Activated CD8-positive, alpha-beta memory T cell treated with anti-CD3 and anti-CD28 coated beads, Interleukin-2, amount 10 ng/mL, durations not matched to agents 7 days and 5 days (primary cell): ENCODE measurements at regions of chr12 and their contacts with region 1.

Region 1: GRCh38 chr12:48851883-48852733 is at the start of gene DDX23:
- DNase-seq: peak; percentile 97
- ATAC-seq: peak; percentile 94
- H3K4me3 Mint-ChIP-seq: peak within 1 kb of the TSS; percentile 96
- H3K27ac Mint-ChIP-seq: peak within 1 kb of the TSS; percentile 97
- H3K4me1 Mint-ChIP-seq: peaks cover 33% of the 10 kb centered on the region
- H3K27me3 Mint-ChIP-seq: no peaks in the 10 kb centered on the region
- total RNA-seq, gene DDX23: 146 to 157 TPM

Region 2: DNA sequence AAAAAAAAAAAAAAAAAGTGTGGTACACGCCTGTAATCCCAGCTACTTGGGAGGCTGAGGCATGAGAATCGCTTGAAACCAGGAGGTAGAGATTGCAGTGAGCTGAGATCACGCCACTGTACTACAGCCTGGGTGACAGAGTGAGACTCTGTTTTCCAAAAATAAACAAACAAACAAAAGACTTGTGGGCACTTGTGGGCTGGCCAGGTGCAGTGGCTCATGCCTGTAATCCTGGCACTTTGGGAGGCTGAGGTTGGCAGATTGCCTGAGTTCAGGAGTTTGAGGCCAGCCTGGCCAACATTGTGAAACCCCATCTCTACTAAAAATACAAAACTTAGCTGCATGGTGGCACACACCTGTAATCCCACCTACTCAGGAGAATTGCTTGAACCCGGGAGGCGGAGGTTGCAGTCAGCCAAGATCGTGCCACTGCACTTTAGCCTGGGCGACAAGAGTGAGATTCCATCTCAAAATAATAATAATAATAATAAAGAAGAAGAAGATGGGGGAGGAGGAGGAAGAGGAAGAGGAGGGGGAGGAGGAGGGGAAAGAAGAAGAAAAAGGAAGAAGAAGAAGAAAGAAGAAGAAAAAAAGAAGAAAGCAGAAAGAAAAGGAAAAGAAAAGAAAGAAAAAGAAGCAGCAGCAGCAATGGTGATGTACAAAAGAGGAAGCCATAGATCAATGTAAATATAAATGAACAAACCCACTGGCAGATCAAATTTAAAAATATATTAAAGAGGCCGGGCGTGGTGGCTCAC is 107.7 kb before region 1 on chr12:
- CTCF ChIA-PET with region 1: no interaction called
- DNase-seq: no peak
- ATAC-seq: no peak
- H3K4me3 Mint-ChIP-seq: no peak overlapping the region
- H3K27ac Mint-ChIP-seq: no peak overlapping the region
- H3K4me1 Mint-ChIP-seq: no peaks in the 10 kb centered on the region
- H3K27me3 Mint-ChIP-seq: peaks cover 23% of the 10 kb centered on the region

Region 3: DNA sequence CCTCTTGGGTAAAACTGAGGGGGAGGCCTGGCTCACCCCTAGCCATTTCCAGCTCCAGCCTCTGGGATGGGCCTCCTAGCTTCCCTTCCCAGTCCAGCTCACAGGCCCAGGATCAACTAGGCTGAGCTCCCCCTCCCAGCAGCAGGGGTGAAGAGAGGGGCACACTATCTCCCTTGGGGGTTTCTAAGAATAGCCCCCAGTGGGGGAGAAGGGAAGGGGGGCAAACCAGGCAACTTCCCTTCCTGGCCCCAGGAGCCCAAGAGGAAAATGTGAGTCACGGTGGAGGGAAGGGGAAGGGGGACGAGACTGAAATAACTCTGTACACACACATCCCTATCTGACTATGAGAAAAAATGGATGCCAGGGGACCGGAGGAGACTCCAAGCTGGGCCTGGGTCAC is 72.2 kb before region 1 on chr12:
- CTCF ChIA-PET with region 1: no interaction called
- DNase-seq: no peak
- ATAC-seq: no peak
- H3K4me3 Mint-ChIP-seq: no peak overlapping the region
- H3K27ac Mint-ChIP-seq: no peak overlapping the region
- H3K4me1 Mint-ChIP-seq: no peaks in the 10 kb centered on the region
- H3K27me3 Mint-ChIP-seq: peaks cover 4% of the 10 kb centered on the region

Region 4: DNA sequence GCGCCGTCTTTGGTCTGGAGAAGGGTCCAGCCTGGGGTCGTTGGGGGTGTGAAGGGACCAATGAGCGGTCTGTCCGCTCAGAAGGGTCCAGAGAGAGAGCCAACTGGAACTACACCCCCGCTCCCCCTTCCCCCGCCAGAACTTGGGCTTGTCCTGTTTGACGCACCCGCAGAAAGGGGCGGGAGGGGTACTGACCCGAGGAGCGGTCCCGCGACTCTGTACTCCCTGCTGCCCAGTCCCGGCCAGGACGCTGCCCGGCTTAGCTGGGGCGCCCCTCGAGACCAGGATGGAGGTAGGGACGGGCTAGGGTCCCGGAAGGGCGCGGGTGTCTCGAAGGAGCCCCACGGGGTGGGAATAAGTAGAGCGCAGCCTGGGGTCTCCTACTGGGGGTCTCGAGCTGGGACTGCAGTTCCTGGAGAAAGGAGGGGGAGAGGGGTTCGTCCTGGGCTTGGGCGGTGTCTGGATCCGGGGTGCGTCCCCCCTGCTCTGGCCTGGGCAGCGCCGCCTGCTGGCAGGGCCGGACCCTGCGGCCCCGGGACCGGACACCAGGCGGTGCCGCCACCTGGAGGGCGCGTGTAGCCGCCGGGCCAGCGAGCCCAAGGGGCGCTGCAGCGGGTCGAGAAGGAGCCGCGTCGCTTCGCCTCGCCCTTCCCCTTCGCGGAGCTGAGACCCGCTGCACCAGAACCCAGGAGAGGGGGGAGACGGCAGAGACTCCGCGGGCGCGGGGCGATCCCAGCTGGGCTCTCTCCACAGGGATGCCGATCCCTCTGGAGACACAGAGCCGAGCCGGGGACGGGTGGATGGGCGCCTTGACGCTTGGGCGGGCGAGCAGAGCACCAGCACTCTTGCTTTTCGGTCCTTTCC is 37.6 kb before region 1 on chr12:
- CTCF ChIA-PET with region 1: interaction called, 44 read pairs
- DNase-seq: peak; percentile 88
- ATAC-seq: peak; percentile 83
- H3K4me3 Mint-ChIP-seq: peak overlapping the region; percentile 96
- H3K27ac Mint-ChIP-seq: peak overlapping the region; percentile 73
- H3K4me1 Mint-ChIP-seq: peaks cover 32% of the 10 kb centered on the region
- H3K27me3 Mint-ChIP-seq: peaks cover 25% of the 10 kb centered on the region

Region 5: DNA sequence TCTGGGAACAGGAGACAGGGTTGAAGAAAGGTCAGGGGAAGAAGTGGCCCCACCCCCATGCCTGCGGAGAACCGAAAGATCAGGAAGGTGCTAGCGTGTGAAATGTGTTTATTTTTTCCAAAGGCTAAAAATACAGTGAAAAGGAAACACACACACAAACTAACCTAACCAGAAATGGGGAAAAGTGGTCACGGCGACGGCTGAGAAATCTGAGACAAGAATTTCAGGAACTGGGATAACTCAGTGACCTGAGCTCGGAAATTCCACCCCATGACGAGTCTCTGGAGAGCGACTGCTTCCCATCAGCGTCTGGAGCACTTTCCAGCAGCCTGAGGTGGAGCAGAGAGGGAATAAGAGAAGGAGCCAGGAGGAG is 30.2 kb after region 1 on chr12:
- CTCF ChIA-PET with region 1: interaction called, 211 read pairs
- DNase-seq: no peak
- ATAC-seq: no peak
- H3K4me3 Mint-ChIP-seq: no peak overlapping the region
- H3K27ac Mint-ChIP-seq: no peak overlapping the region
- H3K4me1 Mint-ChIP-seq: peaks cover 7% of the 10 kb centered on the region
- H3K27me3 Mint-ChIP-seq: peaks cover 37% of the 10 kb centered on the region

Region 6: DNA sequence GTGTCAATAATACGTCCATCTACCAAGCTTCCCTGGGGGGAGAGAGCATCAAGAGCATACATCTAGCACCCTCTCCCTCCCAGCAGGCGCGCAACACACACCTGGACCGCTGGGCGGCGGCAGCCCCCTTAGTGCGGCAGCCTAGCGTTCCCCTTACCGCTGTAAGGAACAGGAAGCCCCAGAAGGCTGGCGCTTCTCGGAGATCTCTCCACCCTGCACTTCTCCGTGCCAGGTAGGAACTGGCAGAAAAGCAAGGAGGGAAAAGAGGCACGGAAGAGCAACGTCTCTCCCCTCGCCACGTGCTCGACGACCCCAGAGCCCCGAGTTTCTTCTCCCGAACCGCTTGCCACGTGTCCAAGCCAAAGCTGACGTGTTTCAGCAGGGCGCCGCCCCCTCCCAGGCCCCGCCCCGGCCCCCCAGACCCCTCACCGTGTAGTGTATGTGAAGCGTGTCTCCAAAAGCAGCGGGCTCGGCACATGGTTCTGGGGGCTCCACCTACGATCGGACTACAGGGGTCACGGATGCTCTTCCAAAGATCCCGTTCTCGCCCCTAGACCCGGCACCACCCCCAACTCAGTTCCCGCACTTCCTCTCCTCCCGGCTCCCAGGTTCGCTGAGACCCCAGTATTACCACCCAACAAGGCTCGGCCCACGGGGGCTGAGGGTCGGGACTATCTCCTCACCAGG is 72.7 kb after region 1 on chr12:
- CTCF ChIA-PET with region 1: interaction called, 32 read pairs
- DNase-seq: peak; percentile 83
- ATAC-seq: peak; percentile 74
- H3K4me3 Mint-ChIP-seq: peak overlapping the region; percentile 92
- H3K27ac Mint-ChIP-seq: peak overlapping the region; percentile 95
- H3K4me1 Mint-ChIP-seq: peaks cover 43% of the 10 kb centered on the region
- H3K27me3 Mint-ChIP-seq: no peaks in the 10 kb centered on the region

Region 7: GRCh38 chr12:48977315-48978281 is 125.5 kb after region 1 on chr12:
- CTCF ChIA-PET with region 1: interaction called, 42 read pairs
- DNase-seq: peak; percentile 81
- ATAC-seq: peak; percentile 62
- H3K4me3 Mint-ChIP-seq: peak overlapping the region; percentile 22
- H3K27ac Mint-ChIP-seq: no peak overlapping the region
- H3K4me1 Mint-ChIP-seq: peaks cover 55% of the 10 kb centered on the region
- H3K27me3 Mint-ChIP-seq: peaks cover 84% of the 10 kb centered on the region

Region 8: GRCh38 chr12:49018261-49019119 is 166.4 kb after region 1 on chr12 and contains the start of gene PRKAG1:
- CTCF ChIA-PET with region 1: interaction called, 16 read pairs
- DNase-seq: peak; percentile 98
- ATAC-seq: peak; percentile 92
- H3K4me3 Mint-ChIP-seq: peak within 1 kb of the TSS; percentile 86
- H3K27ac Mint-ChIP-seq: peak within 1 kb of the TSS; percentile 97
- H3K4me1 Mint-ChIP-seq: peaks cover 28% of the 10 kb centered on the region
- H3K27me3 Mint-ChIP-seq: no peaks in the 10 kb centered on the region
- total RNA-seq, gene PRKAG1: 58.9 to 66.0 TPM